ENCODE measurements at regions of chr1 and their contacts with region 1.

Region 1: GRCh38 chr1:46340404-46341221 is at the start of gene NSUN4:
- DNase-seq: peak; percentile 94
- ATAC-seq: peak; percentile 96
- total RNA-seq, gene NSUN4: 13.4 to 17.4 TPM

Region 2: GRCh38 chr1:46137916-46138315 is 202.7 kb before region 1 on chr1:
- intact Hi-C with region 1: no loop called
- DNase-seq: no peak
- ATAC-seq: no peak

Region 3: DNA sequence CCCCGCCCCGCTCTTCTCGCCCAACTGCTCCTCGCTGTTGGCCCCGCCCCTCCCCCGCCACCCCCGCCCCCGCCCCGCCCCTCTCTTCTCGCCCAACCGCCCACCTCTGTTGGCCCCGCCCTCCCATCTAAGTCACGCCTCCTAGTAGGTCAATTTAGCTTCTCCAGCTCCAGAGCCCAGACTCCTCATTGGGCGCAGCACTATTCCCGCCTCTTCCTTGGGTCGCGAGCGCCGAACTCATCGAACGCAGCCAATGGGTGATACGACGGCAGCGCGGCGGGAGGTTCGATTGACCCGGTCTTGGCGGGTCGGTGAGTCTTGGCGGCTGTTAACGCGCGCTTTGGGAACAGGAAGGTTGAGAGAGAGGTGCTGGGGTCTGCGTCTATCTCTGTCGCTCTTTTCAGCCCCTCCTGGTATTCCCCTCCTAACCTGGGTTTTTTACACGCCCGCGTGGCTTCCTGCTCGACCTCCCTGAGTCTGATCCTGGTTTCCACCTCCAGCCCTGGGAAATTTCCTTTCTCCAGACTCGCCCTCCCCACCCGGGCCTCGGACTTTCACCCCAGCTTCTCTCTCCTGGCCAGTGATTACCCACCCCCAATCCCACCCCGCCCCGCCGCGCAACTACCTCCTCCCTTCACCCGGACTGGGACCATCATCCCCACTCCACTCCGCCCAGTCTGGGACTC is 93.0 kb before region 1 on chr1 and contains the start of gene RAD54L:
- intact Hi-C with region 1: loop called (anchors 10 kb)
- DNase-seq: peak; percentile 98
- ATAC-seq: peak; percentile 97 to 99
- total RNA-seq, gene RAD54L: 0.71 to 0.77 TPM

Region 4: DNA sequence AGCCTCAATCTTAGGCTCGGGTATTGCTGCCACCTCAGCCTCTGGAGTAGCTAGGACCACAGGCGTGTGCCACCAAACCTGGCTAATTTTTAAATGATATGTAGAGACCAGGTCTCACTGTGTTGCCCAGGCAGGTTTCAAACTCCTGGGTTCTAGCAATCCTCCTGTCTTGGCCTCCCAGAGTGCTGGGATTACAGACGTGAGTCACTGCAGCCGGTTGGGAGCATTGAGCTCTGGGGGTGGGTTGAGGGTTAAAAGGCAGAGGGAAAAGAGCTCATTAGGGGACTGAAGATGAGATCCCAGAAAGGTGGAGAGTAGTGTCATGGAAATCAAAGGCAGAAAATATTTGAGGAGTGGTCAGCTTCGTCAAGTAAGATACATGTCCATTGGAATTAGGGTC is 85.9 kb before region 1 on chr1:
- intact Hi-C with region 1: loop called (anchors 10 kb)
- DNase-seq: no peak
- ATAC-seq: no peak

Region 5: GRCh38 chr1:46303038-46303871 is 37.4 kb before region 1 on chr1 and contains the starts of genes LRRC41 and UQCRH:
- intact Hi-C with region 1: loop called in 1 of 2 experiments (anchors 2 kb)
- DNase-seq: peak; percentile 96
- ATAC-seq: peak; percentile 92 to 93
- total RNA-seq, gene LRRC41: 34.5 to 46.4 TPM
- total RNA-seq, gene UQCRH: 770 to 822 TPM

Measured in left cardiac atrium (tissue), 4 donors.